ENCODE measurements at regions of chr19 and their contacts with region 1.

Region 1: DNA sequence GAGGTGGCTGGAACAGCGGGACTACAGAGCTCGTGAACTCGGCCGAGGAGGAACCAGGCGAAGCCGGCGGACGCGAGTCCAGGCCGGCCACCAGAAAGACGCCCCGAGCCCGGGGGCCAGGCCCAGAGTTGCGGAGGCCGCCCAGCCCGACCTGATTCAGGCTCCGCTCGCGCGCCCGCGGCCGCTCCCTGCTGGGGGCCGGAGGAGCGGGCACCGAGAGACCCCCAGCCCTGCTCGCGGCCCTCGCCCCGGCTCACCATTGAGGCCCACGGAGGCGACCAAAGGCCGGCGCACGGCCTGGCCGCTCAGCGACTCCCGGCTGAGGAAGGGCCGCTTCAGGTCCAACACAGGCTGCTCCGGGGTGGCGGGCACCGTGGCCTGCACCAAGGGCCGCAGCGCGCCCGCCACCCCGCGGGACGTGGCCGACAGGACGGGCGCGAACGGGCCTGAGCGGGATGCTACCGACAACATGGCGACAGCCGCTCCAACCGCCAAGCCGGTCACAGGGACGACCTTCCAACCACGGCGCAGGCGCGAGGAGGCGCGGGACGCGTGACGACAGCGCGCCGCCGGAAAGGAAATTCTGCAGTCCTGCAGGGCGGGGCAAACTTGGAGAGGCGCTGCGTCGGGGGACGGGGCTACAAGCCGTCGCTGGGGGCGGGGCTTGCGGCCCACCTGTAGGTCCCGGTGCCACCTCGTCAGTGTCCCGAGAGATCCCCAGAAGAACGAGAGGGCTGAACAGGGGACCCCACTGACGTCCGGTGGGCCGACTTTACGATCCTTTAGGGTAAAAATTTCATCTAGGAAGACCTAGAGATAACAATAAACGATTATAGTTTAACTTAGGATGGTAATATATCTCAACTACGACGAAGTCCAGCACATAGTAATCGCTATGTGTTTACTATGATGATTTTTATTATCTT is at the start of gene UQCRFS1:
- DNase-seq: peak; percentile 97
- H3K4me3 ChIP-seq: peak within 1 kb of the TSS; percentile 82 to 99 (median 91)
- H3K27ac ChIP-seq: peak within 1 kb of the TSS; percentile 93 to 98 (median 96)
- H3K4me1 ChIP-seq: peaks cover 0 to 36% (median 25%) of the 10 kb centered on the region in 4 donors
- H3K27me3 ChIP-seq: no peaks in the 10 kb centered on the region
- CTCF ChIP-seq: no peak
- EP300 ChIP-seq: peak in 1 of 4 donors; percentile 58
- POLR2A ChIP-seq: peak; percentile 66 to 72
- total RNA-seq, gene UQCRFS1: 30.2 to 46.4 (median 41.4) TPM

Region 2: GRCh38 chr19:27793644-27794493 is 1419.0 kb before region 1 on chr19:
- intact Hi-C with region 1: loop called (anchors 5 kb)
- DNase-seq: peak; percentile 96
- H3K4me3 ChIP-seq: peak overlapping the region; percentile 61 to 85 (median 64)
- H3K27ac ChIP-seq: peak overlapping the region; percentile 83 to 93 (median 88)
- H3K4me1 ChIP-seq: peaks cover 0 to 38% (median 27%) of the 10 kb centered on the region in 4 donors
- H3K27me3 ChIP-seq: no peaks in the 10 kb centered on the region
- CTCF ChIP-seq: no peak
- EP300 ChIP-seq: no peak
- POLR2A ChIP-seq: peak; percentile 31 to 61

Region 3: DNA sequence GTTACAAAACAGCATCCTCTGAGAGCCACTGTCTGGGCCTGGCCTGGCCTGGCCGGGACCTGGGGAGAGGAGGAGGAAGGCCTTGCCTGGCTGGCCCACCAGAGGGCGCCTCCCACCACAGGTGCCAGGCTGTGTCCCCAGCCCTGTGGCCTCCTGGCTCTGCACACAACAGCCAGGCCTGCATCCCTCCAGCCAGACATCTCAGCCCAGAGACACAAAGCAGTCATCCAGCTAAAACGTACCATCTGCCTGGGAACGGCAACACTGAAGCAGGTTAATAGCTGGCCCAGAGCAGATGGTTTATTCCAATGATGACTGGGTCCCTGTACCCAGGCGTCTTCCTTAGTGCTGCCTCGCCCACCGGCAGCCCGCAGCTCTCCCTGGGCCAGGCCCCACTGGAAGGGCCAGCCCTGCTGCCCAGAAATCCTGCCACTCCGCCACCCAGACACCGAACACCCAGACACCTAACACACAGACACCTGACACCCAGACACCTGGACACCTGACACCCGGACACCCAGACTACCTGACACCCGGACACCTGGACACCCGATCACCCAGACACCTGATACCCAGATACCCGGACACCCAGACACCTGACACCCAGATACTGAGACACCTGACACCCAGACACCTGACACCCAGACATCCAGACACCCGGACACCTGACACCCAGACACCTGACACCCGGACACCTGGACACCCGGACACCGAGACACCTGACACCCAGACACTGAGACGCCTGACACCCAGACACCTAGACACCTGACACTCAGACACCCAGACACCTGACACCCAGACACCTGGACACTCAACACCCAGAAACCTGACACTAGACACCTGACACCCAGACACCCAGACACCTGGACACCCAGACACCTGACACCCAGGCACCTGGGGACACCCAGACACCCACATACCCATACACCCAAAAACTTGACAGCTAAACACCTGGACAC is 482.0 kb after region 1 on chr19:
- intact Hi-C with region 1: no loop called
- DNase-seq: peak; percentile 95
- H3K4me3 ChIP-seq: no peak overlapping the region
- H3K27ac ChIP-seq: peak overlapping the region; percentile 55 to 62 (median 60)
- H3K4me1 ChIP-seq: peaks cover 0 to 15% (median 14%) of the 10 kb centered on the region in 4 donors
- H3K27me3 ChIP-seq: no peaks in the 10 kb centered on the region
- CTCF ChIP-seq: peak; percentile 73 to 92 (median 81)
- EP300 ChIP-seq: no peak
- POLR2A ChIP-seq: no peak